Head of caudate nucleus (tissue), 42 donors: ENCODE measurements at regions of chr19 and their contacts with region 1.

Region 1: DNA sequence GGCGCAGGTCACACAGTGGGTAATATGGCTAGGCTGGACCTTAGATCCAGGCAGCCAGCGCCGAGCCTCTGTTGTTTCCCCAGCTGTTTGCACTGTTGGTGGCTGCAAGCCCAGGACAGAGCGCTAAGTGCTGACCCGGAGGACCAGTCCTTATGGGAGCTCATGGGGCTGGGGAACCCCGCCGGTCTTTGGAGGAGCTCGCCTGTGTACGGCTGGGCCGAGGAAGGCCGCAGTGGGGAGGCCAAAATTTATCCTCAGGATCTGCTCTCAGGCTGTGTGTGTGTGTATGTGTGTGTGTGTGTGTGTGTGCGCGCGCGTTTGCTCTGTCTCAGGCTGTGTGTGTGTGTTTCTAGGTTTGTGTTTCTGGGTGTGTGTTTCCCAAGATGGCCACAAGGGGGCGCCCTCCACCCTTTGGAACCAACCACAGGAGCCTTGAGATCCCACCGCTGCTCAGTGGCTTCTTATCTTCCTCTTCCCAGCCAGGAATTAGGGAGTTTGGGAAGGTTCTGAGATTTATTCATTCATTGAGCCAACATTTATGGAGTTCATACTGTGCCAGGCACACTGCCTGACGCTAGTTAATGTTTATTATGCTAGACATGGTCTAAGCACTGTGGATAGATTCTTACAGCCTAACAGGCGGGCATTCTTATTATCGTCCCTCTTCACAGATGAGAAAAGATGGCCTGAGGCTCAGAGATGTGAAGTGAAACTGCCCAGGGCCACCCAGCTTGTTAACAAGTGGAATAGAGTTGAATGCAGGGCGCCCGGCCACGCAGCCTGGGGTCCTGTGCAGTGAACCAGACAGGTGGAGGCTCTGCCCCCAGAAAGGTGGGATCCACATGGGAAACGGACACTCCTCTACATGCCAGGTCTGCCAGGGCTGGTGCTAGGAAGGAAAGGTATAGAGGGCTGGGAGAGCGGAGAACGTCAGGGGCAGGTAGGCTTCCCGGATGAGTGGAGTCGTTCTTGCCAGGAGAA is 13.0 kb downstream of the PGLYRP1 start:
- DNase-seq: peak; percentile 53 to 94 (median 85)

Region 2: DNA sequence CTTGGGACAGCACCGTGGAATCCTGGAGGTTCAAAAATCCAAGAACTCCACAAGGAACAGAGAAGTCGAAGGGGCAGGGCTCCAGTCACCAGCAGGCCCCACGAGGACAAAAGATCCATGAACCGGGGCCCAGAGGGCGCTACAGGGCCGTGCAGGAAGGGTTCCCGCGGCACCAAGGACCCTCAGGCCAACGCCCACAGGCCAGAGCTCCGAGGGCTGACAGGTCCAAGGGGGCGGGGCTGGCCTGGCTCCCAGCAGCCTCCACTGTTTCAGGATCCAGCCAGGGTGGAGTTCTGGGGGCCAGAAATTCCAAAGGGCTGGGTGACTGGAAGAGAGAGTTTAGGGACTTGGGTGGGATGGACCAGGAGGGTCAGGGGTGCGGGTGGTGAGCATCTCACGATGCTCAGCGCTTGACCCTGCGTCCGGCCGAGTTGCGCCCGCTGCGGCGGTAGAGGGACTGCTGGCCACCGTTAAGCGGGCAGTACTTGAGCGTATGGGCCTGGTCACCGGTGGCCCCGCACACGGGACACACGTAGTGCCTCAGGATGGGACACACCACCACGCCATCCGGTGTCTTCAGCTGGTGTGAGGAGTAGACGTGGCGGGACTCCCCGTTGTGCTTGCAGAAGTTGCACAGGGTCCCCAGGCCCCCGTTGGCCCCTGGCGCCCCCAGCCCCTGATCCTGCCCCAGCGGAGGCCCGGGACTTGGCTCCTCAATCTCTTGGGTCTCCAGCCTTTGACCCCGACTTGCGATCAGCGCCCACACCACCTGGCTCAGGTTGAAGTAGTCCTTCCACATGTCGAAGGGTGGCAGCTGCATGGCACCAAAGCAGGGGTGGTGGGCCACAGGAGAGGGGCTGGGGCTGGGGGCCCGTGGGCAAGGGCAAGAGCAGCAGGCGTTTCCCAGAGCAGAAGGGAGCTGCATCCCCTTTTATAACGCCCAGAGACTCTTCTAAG is 95.7 kb before region 1 on chr19 and contains the start of gene NANOS2:
- intact Hi-C with region 1: loop called (anchors 2 kb)
- DNase-seq: peak in 11 of 42 donors; percentile 14 to 72 (median 42)

Region 3: GRCh38 chr19:45955905-45956608 is 53.8 kb before region 1 on chr19:
- intact Hi-C with region 1: loop called (anchors 5 kb)
- DNase-seq: peak; percentile 68 to 96 (median 87)

Region 4: DNA sequence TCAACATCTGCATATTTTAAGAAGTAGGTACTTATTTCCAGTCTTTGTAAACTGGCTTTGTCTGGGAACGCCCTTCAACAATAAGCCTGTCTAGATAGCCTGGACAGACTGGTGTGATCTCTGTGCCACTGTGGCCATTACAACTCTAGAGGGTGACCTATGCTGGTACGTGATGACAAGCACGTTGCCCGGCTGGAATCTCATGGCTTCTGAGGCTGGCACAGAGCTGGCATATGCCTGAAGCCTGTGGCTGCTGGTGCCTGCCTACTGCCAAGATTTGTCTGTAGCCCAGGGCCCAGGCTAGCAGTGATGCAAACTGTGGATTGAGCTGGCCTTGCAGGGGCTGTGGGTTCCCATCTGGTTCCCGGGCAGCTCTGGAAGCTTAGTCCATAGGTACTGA is 80.6 kb after region 1 on chr19:
- intact Hi-C with region 1: no loop called
- DNase-seq: no peak